Activated naive CD4-positive, alpha-beta T cell treated with anti-CD3 and anti-CD28 coated beads for 36 hours (primary cell): ENCODE measurements at regions of chr11 and their contacts with region 1.

Region 1: DNA sequence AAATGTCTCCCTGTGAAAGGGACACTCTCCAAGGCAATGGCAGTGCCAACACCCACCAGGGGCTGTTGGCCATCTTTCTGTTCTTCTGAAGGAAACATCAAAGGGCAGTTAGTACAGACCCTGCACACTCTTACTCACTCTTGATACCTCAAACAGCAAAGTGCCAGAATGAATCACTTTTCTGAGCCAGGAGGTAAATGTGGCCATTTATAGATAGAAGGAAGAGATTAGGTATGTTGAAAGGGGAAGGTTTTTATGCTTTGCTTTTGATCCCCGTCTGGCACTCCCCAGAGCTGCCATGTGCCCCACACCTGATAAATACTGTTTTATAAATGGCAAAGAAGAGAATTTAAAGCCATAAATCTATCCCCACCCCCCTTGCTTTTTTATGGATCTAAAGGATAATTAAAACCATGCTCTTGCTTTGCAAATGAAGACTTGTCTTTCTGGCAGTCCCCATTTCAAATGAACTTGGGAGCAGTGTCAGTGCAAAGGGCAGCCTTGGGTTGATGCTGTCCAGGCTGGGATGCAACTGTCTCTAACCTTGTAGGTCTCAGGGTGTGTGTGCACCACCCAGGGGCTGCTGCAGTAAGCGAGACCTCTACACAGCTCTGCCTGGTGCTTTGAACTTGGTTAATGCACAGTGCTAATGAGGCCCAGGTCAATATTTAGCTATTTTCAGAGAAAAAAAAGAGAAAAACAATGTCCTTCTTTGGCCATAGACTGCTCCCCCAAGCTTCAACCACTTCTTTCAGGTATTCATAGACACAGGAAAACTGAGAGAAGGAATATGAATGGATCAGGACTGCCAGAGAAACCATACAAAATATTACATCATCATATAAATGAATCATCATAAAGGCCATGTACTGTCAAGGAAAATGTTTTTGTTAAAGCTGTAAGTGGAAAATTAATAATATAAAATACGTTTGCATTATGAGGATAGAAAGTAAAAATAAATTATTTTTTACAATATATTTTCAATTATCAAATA is 207.5 kb downstream of the ETS1 start:
- DNase-seq: peak; percentile 56
- H3K4me3 Mint-ChIP-seq: no peak overlapping the region
- H3K27ac Mint-ChIP-seq: peak overlapping the region; percentile 61
- H3K4me1 Mint-ChIP-seq: peaks cover 37% of the 10 kb centered on the region
- H3K27me3 Mint-ChIP-seq: no peaks in the 10 kb centered on the region

Region 2: GRCh38 chr11:128336203-128336602 is 43.7 kb before region 1 on chr11:
- CTCF ChIA-PET with region 1: no interaction called
- intact Hi-C with region 1: no loop called
- DNase-seq: no peak
- H3K4me3 Mint-ChIP-seq: no peak overlapping the region
- H3K27ac Mint-ChIP-seq: no peak overlapping the region
- H3K4me1 Mint-ChIP-seq: peaks cover 62% of the 10 kb centered on the region
- H3K27me3 Mint-ChIP-seq: no peaks in the 10 kb centered on the region

Region 3: DNA sequence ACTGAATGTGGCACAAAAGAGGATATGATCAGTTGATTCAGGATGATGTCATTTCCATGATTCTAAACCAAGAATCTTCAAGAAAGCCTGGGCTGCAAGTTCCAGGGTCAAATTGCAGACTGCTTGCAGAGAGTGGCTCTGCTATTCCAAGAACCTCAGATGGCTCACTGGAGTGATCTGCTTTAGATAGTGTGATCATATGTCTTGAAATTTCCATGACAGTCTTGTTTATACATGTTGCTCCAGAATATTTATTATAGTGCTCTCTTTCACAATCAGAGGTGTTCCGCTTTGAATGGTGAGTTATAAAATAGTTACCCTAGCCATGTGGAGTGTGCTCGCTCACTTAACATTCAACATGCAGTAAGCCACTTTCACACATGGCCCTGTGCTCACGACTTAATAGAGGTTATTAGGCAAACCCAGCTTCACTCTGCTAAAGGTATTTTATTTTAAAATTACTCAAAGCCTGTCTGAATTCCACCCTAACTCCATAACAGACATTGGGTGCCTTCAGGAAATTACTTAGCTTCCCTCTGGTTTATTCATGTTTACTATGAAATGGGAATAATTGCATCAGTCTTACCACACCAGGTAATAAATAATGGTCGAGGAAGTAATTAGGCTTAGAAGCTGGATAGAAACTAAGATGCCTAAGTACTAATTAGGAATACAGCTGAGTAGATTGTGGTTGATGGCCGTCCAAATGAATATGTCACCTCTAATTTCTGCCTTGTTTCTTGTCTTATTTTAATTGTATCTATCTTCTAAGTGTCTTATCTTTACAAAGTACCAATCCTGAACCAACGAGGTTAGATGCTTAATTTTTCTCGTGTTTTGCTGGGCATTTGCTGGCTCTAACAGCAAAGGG is 19.6 kb after region 1 on chr11:
- CTCF ChIA-PET with region 1: no interaction called
- intact Hi-C with region 1: loop called (anchors 2 kb)
- DNase-seq: peak; percentile 24
- H3K4me3 Mint-ChIP-seq: no peak overlapping the region
- H3K27ac Mint-ChIP-seq: no peak overlapping the region
- H3K4me1 Mint-ChIP-seq: peaks cover 34% of the 10 kb centered on the region
- H3K27me3 Mint-ChIP-seq: no peaks in the 10 kb centered on the region

Region 4: GRCh38 chr11:128412847-128413791 is 33.2 kb after region 1 on chr11:
- CTCF ChIA-PET with region 1: no interaction called
- intact Hi-C with region 1: loop called (anchors 2 kb)
- DNase-seq: no peak
- H3K4me3 Mint-ChIP-seq: no peak overlapping the region
- H3K27ac Mint-ChIP-seq: peak overlapping the region; percentile 2
- H3K4me1 Mint-ChIP-seq: peaks cover 72% of the 10 kb centered on the region
- H3K27me3 Mint-ChIP-seq: no peaks in the 10 kb centered on the region